ENCODE measurements at regions of chr19 and their contacts with region 1.

Region 1: DNA sequence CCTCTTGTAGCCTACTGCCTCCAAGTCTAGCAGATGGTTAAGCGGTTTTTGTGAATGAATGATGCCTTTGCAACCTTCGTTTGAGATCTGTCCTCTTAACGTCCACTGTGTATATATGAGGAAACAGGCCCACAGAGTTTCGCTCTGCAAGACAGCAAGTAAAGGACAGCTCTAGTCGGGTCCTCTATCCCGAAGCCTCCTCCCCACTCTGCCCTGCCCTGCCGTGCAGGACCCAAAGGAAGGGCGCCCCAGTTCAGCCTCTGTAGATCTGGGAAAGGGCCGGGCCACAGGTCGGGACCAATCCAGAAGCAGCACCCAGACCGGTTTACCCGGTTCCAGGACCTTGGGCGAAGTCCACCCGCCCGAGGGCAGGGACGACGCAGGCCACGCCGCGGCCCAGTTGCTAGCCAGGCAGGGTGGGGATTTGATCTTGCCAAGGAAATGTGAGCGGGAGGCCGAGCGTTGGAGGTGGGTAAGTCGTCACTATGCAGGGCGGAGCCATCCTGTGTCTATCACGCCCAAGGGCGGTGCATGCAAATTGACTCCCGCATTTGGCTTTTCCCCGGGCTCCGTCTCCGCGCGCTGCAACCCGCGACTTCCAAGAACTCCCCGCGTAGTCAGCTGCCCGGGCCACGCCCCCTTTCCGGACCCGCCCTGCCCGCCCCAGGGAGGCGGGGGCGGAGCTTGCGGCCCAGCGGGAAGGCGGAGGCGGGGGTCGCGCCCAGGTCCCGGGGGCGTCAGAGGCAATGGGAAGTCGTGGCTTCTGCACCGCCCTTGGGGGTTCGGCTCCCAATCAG is 12.5 kb downstream of the IER2 start:
- DNase-seq: peak; percentile 99

Region 2: GRCh38 chr19:13839130-13839937 is 676.6 kb after region 1 on chr19:
- intact Hi-C with region 1: loop called (anchors 5 kb)
- DNase-seq: peak; percentile 99